ENCODE measurements at regions of chr22 and their contacts with region 1.

Region 1: DNA sequence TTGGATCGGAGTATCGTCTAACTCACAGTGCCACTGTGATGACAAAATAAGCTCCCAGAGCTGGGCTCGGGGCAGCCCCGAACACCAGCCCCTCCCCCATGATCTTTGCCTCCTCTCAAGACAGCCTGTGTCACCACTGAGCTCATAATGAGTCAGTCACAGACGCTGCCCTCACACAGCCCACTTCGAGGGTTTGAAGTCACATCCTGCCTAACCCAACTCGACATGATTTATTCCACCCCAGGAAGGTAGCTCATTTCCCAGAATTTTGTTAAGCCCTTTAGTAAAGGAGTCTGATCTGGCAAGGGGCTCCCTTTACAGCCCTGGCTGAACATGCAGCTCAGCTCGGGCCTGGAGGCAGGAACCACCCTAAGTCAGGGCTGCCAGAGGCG is 22.8 kb downstream of the MYH9 start:
- DNase-seq: peak; percentile 80
- H3K4me3 ChIP-seq: no peak overlapping the region
- H3K27ac ChIP-seq: peak overlapping the region; percentile 60
- H3K4me1 ChIP-seq: peaks cover 70% of the 10 kb centered on the region
- H3K27me3 ChIP-seq: no peaks in the 10 kb centered on the region
- CTCF ChIP-seq: no peak

Region 2: GRCh38 chr22:36026741-36027140 is 338.3 kb before region 1 on chr22:
- CTCF ChIA-PET with region 1: no interaction called
- POLR2A ChIA-PET with region 1: no interaction called
- intact Hi-C with region 1: no loop called
- DNase-seq: peak; percentile 46
- H3K4me3 ChIP-seq: peak overlapping the region; percentile 89
- H3K27ac ChIP-seq: peak overlapping the region; percentile 52
- H3K4me1 ChIP-seq: peaks cover 32% of the 10 kb centered on the region
- H3K27me3 ChIP-seq: no peaks in the 10 kb centered on the region
- CTCF ChIP-seq: no peak

Region 3: GRCh38 chr22:36454916-36455570 is 90.0 kb after region 1 on chr22:
- CTCF ChIA-PET with region 1: no interaction called
- POLR2A ChIA-PET with region 1: interaction called, 12 read pairs
- intact Hi-C with region 1: no loop called
- DNase-seq: peak; percentile 88
- H3K4me3 ChIP-seq: peak overlapping the region; percentile 41
- H3K27ac ChIP-seq: peak overlapping the region; percentile 91
- H3K4me1 ChIP-seq: peaks cover 15% of the 10 kb centered on the region
- H3K27me3 ChIP-seq: no peaks in the 10 kb centered on the region
- CTCF ChIP-seq: 0 out of 2 replicates have a peak, but pooled peaks have one; percentile 21

Measured in A673 (cell line).